Heart left ventricle (tissue), 16 donors: ENCODE measurements at regions of chr1 and their contacts with region 1.

Region 1: DNA sequence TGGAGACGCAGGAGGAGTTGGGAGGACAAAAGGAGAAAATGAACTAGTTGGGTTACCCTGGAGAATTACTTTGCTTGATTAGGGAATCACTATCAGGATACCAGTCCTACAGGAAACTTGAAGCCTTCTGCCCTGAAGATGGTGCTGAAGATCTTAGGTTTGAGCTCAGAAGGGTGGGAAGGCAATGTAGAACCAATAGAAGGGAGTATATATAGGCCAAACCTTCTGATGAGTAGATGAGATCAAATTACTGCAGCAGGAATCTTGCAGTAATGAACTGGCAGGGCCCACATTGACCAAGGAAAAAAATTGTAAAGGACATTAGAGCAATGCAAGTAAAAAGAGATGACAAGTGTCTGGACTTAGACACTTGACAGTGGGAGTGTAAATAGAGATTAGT is 116.3 kb upstream of the CACYBP start:
- DNase-seq: no peak
- ATAC-seq: peak in 1 of 4 donors; percentile 29
- H3K4me3 ChIP-seq: no peak overlapping the region
- H3K27ac ChIP-seq: no peak overlapping the region
- H3K4me1 ChIP-seq: peaks cover 0 to 20% (median 14%) of the 10 kb centered on the region in 12 donors
- H3K27me3 ChIP-seq: no peaks in the 10 kb centered on the region
- CTCF ChIP-seq: peak in 1 of 12 donors; percentile 7
- POLR2A ChIP-seq: no peak

Region 2: GRCh38 chr1:174982971-174983689 is 99.7 kb after region 1 on chr1:
- intact Hi-C with region 1: loop called in 2 of 10 experiments (anchors 10 kb)
- DNase-seq: no peak
- ATAC-seq: no peak
- H3K4me3 ChIP-seq: no peak overlapping the region
- H3K27ac ChIP-seq: no peak overlapping the region
- H3K4me1 ChIP-seq: no peaks in the 10 kb centered on the region
- H3K27me3 ChIP-seq: no peaks in the 10 kb centered on the region
- CTCF ChIP-seq: peak; percentile 43 to 79 (median 69)
- POLR2A ChIP-seq: no peak